Mucosa of descending colon (tissue), 3 donors: ENCODE measurements at regions of chr10 and their contacts with region 1.

Region 1: DNA sequence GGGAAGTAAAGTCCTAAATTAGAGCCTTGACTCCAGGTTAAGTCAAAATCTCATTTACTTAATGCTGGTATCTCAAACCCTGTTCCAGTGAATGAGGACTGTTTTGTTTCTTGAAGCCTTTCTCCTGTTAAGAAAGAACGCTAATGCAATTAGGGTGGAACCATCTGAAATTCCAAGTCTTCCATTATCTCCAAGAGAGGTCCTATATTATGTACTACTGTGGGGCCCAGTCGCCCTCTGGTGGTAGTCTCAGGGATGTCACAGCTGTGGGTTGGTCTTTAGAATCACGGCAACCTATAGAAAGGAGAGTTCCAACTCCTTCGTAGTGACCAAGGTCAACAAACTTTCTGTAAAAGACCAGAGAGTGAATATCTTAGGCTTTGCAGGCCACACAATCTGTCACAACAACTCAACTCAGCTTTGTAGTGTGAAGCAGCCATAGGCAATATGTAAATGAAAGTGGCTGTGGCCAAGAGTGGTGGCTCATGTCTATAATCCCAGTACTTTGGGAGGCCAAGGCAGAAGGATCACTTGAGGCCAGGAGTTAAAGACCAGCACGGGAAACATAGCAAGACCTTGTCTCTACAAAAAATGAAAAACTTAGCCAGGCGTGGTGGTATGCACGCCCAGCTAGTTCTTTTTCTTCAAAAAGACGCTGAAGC is 9.3 kb downstream of the RPP38 start:
- DNase-seq: peak in 2 of 3 donors; percentile 79 to 90
- ATAC-seq: peak; percentile 96
- H3K4me3 ChIP-seq: no peak overlapping the region
- H3K4me1 ChIP-seq: peaks cover 8% of the 10 kb centered on the region
- CTCF ChIP-seq: peak; percentile 54

Region 2: DNA sequence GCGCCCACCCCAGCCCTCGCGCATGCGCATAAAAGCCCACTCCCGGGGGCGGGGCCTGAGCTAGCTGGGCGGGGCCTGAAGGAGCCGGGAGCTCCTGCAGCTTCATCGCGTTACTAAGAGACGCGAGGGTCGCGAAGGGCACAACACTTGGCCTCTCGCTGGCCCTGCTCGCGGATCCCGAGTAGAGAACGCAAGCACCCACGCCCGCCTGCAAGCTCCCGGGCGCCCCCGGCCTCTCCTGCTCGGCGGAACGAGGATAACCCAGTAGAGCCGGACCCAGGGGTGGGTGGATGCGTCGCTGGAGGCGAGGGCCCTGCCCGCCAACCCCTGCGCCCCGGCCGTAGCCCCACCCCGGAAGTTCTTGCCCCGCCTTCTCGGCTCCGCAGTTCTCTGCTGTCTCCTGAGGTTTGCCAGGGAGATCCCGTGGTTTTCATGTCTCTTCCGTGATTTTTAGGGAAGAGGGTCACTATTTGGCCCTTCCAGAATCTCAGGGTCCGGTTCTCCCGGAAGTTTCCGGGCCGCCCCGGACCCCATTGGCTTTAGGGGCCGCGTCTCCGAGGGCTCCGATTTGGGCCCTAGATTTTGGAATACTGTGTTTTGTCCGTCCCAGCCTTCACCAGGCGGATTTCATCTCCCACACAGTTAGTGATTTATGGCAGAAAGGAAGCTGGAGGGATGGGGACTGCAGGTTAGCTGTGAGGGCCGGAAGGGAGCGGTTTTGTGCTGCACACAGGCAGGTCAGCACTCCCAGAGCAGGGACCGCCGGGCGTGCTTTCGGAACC is 147.0 kb before region 1 on chr10 and contains the start of gene MEIG1:
- intact Hi-C with region 1: loop called in 1 of 2 experiments (anchors 10 kb)
- DNase-seq: peak; percentile 95 to 99 (median 96)
- ATAC-seq: peak; percentile 98
- H3K4me3 ChIP-seq: peak within 1 kb of the TSS; percentile 46
- H3K4me1 ChIP-seq: peaks cover 5% of the 10 kb centered on the region
- CTCF ChIP-seq: no peak
- total RNA-seq, gene MEIG1: not detected

Region 3: GRCh38 chr10:15168781-15169554 is 62.5 kb after region 1 on chr10:
- intact Hi-C with region 1: loop called in 1 of 2 experiments (anchors 10 kb)
- DNase-seq: peak; percentile 97 to 98 (median 98)
- ATAC-seq: peak; percentile 92
- H3K4me3 ChIP-seq: no peak overlapping the region
- H3K4me1 ChIP-seq: peaks cover 11% of the 10 kb centered on the region
- CTCF ChIP-seq: no peak